Gastrocnemius medialis (tissue), 4 donors: ENCODE measurements at regions of chr12 and their contacts with region 1.

Region 1: GRCh38 chr12:89140602-89141238 is 211.6 kb downstream of the DUSP6 start:
- DNase-seq: peak; percentile 43 to 61
- ATAC-seq: peak; percentile 93 to 99
- H3K4me3 ChIP-seq: no peak overlapping the region
- H3K27ac ChIP-seq: no peak overlapping the region
- H3K4me1 ChIP-seq: peaks cover 7 to 13% of the 10 kb centered on the region in 2 donors
- H3K27me3 ChIP-seq: no peaks in the 10 kb centered on the region
- CTCF ChIP-seq: no peak
- POLR2A ChIP-seq: no peak

Region 2: GRCh38 chr12:89212339-89212771 is 71.6 kb after region 1 on chr12:
- in situ Hi-C with region 1: no loop called
- intact Hi-C with region 1: loop called (anchors 10 kb)
- DNase-seq: peak in 1 of 2 donors; percentile 24
- ATAC-seq: peak; percentile 81
- H3K4me3 ChIP-seq: no peak overlapping the region
- H3K27ac ChIP-seq: peak overlapping the region; percentile 16 to 62 (median 52)
- H3K4me1 ChIP-seq: peaks cover 7 to 14% of the 10 kb centered on the region in 2 donors
- H3K27me3 ChIP-seq: no peaks in the 10 kb centered on the region
- CTCF ChIP-seq: no peak
- POLR2A ChIP-seq: no peak

Region 3: GRCh38 chr12:89343127-89343526 is 202.4 kb after region 1 on chr12:
- in situ Hi-C with region 1: no loop called
- intact Hi-C with region 1: no loop called
- DNase-seq: no peak
- ATAC-seq: no peak
- H3K4me3 ChIP-seq: no peak overlapping the region
- H3K27ac ChIP-seq: no peak overlapping the region
- H3K4me1 ChIP-seq: peaks cover 0 to 8% of the 10 kb centered on the region in 2 donors
- H3K27me3 ChIP-seq: peaks cover 3 to 7% (median 6%) of the 10 kb centered on the region in 3 donors
- CTCF ChIP-seq: no peak
- POLR2A ChIP-seq: no peak